Caco-2 (cell line): ENCODE measurements at regions of chr4 and their contacts with region 1.

Region 1: GRCh38 chr4:147539959-147540358 is 59.1 kb downstream of the EDNRA start:
- DNase-seq: no peak
- H3K4me3 ChIP-seq: no peak overlapping the region
- H3K4me3 Mint-ChIP-seq: no peak overlapping the region
- H3K27ac Mint-ChIP-seq: no peak overlapping the region
- H3K4me1 ChIP-seq: peaks cover 24% of the 10 kb centered on the region
- H3K4me1 Mint-ChIP-seq: peaks cover 26% of the 10 kb centered on the region
- H3K27me3 ChIP-seq: no peaks in the 10 kb centered on the region
- H3K27me3 Mint-ChIP-seq: no peaks in the 10 kb centered on the region
- CTCF ChIP-seq: no peak

Region 2: GRCh38 chr4:147050356-147050765 is 489.6 kb before region 1 on chr4:
- CTCF ChIA-PET with region 1: no interaction called
- POLR2A ChIA-PET with region 1: no interaction called
- intact Hi-C with region 1: no loop called
- DNase-seq: no peak
- H3K4me3 ChIP-seq: no peak overlapping the region
- H3K4me3 Mint-ChIP-seq: no peak overlapping the region
- H3K27ac Mint-ChIP-seq: no peak overlapping the region
- H3K4me1 ChIP-seq: no peaks in the 10 kb centered on the region
- H3K4me1 Mint-ChIP-seq: no peaks in the 10 kb centered on the region
- H3K27me3 ChIP-seq: no peaks in the 10 kb centered on the region
- H3K27me3 Mint-ChIP-seq: peaks cover 15% of the 10 kb centered on the region
- CTCF ChIP-seq: no peak

Region 3: GRCh38 chr4:147581601-147582350 is 41.8 kb after region 1 on chr4:
- CTCF ChIA-PET with region 1: no interaction called
- POLR2A ChIA-PET with region 1: no interaction called
- intact Hi-C with region 1: loop called (anchors 5 kb)
- DNase-seq: no peak
- H3K4me3 ChIP-seq: no peak overlapping the region
- H3K4me3 Mint-ChIP-seq: no peak overlapping the region
- H3K27ac Mint-ChIP-seq: no peak overlapping the region
- H3K4me1 ChIP-seq: peaks cover 7% of the 10 kb centered on the region
- H3K4me1 Mint-ChIP-seq: peaks cover 7% of the 10 kb centered on the region
- H3K27me3 ChIP-seq: no peaks in the 10 kb centered on the region
- H3K27me3 Mint-ChIP-seq: no peaks in the 10 kb centered on the region
- CTCF ChIP-seq: no peak

Region 4: DNA sequence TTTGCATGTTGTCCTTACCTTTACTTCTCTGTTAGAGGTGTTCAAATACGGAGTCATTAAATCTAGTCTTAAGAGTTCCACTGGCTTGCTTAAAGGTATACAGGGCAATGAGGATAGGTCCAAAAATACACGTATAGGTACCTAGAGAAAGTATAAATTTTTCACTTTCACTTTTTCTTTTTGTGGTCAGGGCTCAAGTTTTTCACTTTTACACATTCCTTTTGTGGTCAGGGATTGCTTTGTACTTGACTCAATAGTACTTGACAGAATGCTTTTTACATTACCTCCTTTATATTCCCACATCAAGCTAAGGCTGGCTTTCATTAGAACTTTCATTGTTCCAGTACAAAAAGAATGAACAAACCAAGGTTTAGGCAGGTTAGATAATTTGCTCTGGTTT is 99.0 kb after region 1 on chr4:
- CTCF ChIA-PET with region 1: no interaction called
- POLR2A ChIA-PET with region 1: no interaction called
- intact Hi-C with region 1: no loop called
- DNase-seq: no peak
- H3K4me3 ChIP-seq: no peak overlapping the region
- H3K4me3 Mint-ChIP-seq: no peak overlapping the region
- H3K27ac Mint-ChIP-seq: no peak overlapping the region
- H3K4me1 ChIP-seq: no peaks in the 10 kb centered on the region
- H3K4me1 Mint-ChIP-seq: no peaks in the 10 kb centered on the region
- H3K27me3 ChIP-seq: no peaks in the 10 kb centered on the region
- H3K27me3 Mint-ChIP-seq: no peaks in the 10 kb centered on the region
- CTCF ChIP-seq: no peak